H1 (cell line): ENCODE measurements at regions of chr1 and their contacts with region 1.

Region 1: GRCh38 chr1:57770772-57771171 is 346.9 kb upstream of the DAB1 start:
- DNase-seq: no peak
- H3K4me3 ChIP-seq: no peak overlapping the region
- H3K27ac ChIP-seq: no peak overlapping the region
- H3K4me1 ChIP-seq: no peaks in the 10 kb centered on the region
- H3K27me3 ChIP-seq: no peaks in the 10 kb centered on the region
- CTCF ChIP-seq: peak in 1 of 3 experiments; percentile 53; a peak in 1 of 4 replicates
- EP300 ChIP-seq: no peak
- POLR2A ChIP-seq: no peak
- RAD21 ChIP-seq: peak; percentile 23; a peak in 1 of 4 replicates

Region 2: GRCh38 chr1:57752843-57753242 is 17.9 kb before region 1 on chr1:
- CTCF ChIA-PET with region 1: interaction called, 26 read pairs
- POLR2A ChIA-PET with region 1: no interaction called
- DNase-seq: no peak
- H3K4me3 ChIP-seq: no peak overlapping the region
- H3K27ac ChIP-seq: no peak overlapping the region
- H3K4me1 ChIP-seq: no peaks in the 10 kb centered on the region
- H3K27me3 ChIP-seq: 0 out of 7 replicates have a peak, but pooled peaks cover 0 to 2% (median 0%) of the 10 kb centered on the region in 4 experiments
- CTCF ChIP-seq: no peak
- EP300 ChIP-seq: no peak
- POLR2A ChIP-seq: no peak
- RAD21 ChIP-seq: no peak

Region 3: GRCh38 chr1:57782357-57782756 is 11.6 kb after region 1 on chr1:
- CTCF ChIA-PET with region 1: interaction called, 19 read pairs
- POLR2A ChIA-PET with region 1: no interaction called
- DNase-seq: no peak
- H3K4me3 ChIP-seq: no peak overlapping the region
- H3K27ac ChIP-seq: no peak overlapping the region
- H3K4me1 ChIP-seq: no peaks in the 10 kb centered on the region
- H3K27me3 ChIP-seq: no peaks in the 10 kb centered on the region
- CTCF ChIP-seq: no peak
- EP300 ChIP-seq: no peak
- POLR2A ChIP-seq: no peak
- RAD21 ChIP-seq: no peak